ENCODE measurements at regions of chr18 and their contacts with region 1.

Region 1: DNA sequence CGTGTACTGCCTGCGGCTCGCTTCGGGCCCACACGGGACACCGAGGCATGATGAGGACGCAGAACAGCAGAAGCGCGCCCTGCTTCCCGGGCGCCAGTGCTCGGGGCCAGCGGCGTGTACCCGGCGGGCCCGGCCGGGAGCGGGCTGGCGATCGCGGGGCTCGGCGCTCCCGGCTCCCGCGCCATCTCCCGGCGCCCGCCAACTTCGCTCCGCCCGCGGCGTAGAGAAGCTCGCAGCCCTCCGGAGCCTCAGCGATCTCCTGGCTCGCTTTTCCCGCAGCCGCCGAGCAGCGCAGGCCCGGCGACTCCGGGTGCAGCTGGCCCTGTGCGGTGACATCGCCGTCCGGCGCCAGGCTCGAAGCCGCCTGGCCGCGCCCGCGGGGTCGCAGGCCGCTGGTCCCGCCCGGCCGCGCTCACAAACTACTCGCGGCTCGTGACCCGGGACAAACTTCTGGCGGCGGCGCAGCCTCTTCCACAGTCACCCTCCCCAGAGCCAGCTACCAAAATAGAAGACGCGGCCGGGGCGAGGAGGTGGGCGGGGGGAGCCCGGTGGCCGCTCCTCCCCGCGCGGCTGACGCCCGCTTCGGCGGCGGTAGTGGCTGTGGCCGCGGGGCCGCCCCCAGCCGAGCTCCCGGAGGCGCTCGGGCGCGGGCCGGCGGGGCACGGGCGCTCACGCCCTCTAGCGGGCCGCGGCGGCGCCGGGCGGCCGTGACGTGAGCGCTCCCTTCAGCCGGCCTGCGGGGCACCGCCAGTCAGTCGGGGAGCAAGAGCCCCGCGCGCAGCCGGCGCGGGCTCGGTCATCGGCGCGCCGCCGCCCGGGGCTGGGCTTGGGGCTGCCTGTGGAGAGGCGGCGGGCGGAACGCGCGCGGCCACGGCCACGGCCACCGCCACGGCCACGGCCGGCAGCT is at the start of gene PTPRM:
- DNase-seq: peak; percentile 93 to 97 (median 97)
- ATAC-seq: peak; percentile 93 to 96
- H3K4me3 ChIP-seq: peak within 1 kb of the TSS; percentile 84
- H3K27ac ChIP-seq: peak within 1 kb of the TSS; percentile 100
- H3K4me1 ChIP-seq: peaks cover 3% of the 10 kb centered on the region
- H3K27me3 ChIP-seq: no peaks in the 10 kb centered on the region
- total RNA-seq, gene PTPRM: 55.1 to 76.2 (median 62.9) TPM

Region 2: DNA sequence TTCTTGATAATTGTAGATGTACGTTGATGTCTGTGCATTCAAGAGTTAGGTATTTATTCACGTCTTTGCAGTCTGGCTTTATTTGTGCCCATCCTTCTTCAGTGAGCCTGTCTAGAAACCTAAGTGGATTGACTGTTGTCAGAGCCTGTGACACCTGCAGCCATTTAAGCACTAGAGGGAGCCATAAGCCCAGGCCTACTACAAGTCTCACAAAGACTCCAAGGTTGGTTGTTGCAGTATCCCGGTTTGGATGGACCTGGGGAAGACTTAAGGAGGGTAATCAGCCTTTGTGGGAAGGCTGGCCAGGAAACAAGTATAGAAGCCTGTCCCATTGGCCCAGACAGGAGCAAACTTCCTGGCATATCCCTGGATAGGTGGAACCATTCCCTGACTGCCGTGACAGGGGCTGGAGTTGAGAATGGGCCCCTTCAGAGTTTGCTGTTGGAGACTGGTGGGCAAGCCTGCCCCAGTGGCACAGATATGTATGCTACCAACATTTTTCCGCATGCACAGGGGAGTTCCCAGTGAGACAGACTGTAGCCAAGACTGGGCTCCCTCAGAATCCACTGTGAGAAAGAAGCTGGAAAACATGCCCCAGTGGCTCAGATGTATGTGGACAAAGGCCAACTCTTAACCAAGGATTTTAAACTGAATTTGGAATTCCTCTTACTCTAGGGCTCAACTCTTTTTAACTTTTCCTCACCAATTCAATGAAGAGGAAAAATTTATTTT is 345.2 kb before region 1 on chr18:
- intact Hi-C with region 1: loop called in 1 of 4 experiments (anchors 5 kb)
- DNase-seq: no peak
- ATAC-seq: peak; percentile 83 to 89
- H3K4me3 ChIP-seq: no peak overlapping the region
- H3K27ac ChIP-seq: no peak overlapping the region
- H3K4me1 ChIP-seq: no peaks in the 10 kb centered on the region
- H3K27me3 ChIP-seq: no peaks in the 10 kb centered on the region

Region 3: GRCh38 chr18:7370802-7371201 is 196.0 kb before region 1 on chr18:
- intact Hi-C with region 1: loop called in 2 of 4 experiments (anchors 5 to 10 kb)
- DNase-seq: peak; percentile 87 to 91 (median 89)
- ATAC-seq: peak; percentile 95 to 97
- H3K4me3 ChIP-seq: no peak overlapping the region
- H3K27ac ChIP-seq: no peak overlapping the region
- H3K4me1 ChIP-seq: peaks cover 4% of the 10 kb centered on the region
- H3K27me3 ChIP-seq: no peaks in the 10 kb centered on the region

Region 4: GRCh38 chr18:7452331-7452730 is 114.5 kb before region 1 on chr18:
- intact Hi-C with region 1: loop called in 1 of 4 experiments (anchors 10 kb)
- DNase-seq: peak in 1 of 3 donors; percentile 29
- ATAC-seq: peak; percentile 59 to 82
- H3K4me3 ChIP-seq: no peak overlapping the region
- H3K27ac ChIP-seq: no peak overlapping the region
- H3K4me1 ChIP-seq: no peaks in the 10 kb centered on the region
- H3K27me3 ChIP-seq: no peaks in the 10 kb centered on the region

Region 5: DNA sequence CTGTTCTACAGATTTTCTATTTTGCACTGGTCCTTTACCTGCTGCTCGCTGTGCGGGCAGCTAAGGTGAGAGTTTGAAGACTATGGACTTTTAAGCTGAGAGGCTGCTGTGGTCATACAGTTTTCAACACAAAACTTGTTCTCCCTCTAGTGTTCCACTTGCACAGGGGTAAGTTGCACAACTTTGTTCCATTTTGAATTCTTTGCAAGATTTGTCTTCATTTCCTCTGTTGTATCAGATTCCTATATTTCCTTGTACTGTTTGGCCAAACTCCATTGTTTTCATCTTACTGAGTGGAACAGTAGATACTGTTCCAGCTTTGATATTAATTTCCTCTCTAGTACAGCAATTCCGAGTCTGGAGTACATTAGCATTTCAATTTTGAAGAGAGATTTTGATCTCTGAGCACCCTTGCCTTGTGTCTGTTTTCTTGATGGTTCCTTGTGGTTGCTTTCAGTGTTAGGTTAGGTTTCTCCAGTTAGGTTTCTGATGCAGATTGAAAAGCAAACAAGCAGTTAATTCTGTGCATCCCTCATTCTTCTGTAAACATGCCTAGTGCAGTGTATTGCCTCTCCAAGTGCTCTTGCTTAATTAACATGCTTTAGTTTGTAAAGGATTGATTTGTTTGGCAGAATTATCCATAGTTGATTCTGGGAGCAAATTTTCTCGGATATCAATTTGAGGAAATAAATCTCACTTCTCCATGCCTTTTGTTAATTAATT is 189.1 kb after region 1 on chr18:
- intact Hi-C with region 1: loop called in 2 of 4 experiments (anchors 10 kb)
- DNase-seq: no peak
- ATAC-seq: peak; percentile 63 to 77
- H3K4me3 ChIP-seq: no peak overlapping the region
- H3K27ac ChIP-seq: no peak overlapping the region
- H3K4me1 ChIP-seq: peaks cover 15% of the 10 kb centered on the region
- H3K27me3 ChIP-seq: no peaks in the 10 kb centered on the region